Posterior vena cava (tissue), 2 donors: ENCODE measurements at regions of chr7 and their contacts with region 1.

Region 1: DNA sequence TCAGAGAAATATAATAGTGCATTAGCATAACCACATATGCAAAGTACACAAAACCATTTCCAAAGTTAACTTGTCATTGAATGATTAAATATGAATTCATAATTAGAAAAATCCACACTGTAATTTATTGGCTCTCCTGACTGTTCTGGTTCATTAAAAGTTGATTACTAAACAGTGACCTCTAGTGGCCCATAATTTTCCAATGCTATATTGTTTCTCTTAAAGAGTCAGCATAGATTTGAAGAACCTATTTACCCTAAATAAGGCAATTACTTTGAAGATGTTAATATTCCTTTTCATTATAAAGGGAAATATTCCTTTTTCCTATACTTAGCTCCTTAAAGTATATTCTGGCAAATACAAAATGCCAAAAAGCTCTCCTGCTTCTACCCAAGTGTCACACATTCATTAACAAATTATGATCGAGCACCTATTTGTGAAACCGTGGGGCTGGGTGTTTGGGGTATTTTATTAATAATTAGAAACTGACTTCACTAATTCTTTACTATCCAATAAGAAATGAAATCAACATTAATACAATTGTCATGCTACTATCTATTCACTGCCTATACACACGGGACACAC is 86.2 kb downstream of the HIBADH start:
- DNase-seq: no peak

Region 2: GRCh38 chr7:27196287-27196767 is 380.1 kb before region 1 on chr7:
- intact Hi-C with region 1: loop called in 1 of 2 experiments (anchors 10 kb)
- DNase-seq: peak; percentile 94

Region 3: GRCh38 chr7:27210441-27211083 is 365.9 kb before region 1 on chr7:
- intact Hi-C with region 1: loop called (anchors 5 to 10 kb)
- DNase-seq: peak; percentile 84

Region 4: GRCh38 chr7:27235387-27236311 is 340.8 kb before region 1 on chr7:
- intact Hi-C with region 1: loop called in 1 of 2 experiments (anchors 10 kb)
- DNase-seq: no peak

Region 5: DNA sequence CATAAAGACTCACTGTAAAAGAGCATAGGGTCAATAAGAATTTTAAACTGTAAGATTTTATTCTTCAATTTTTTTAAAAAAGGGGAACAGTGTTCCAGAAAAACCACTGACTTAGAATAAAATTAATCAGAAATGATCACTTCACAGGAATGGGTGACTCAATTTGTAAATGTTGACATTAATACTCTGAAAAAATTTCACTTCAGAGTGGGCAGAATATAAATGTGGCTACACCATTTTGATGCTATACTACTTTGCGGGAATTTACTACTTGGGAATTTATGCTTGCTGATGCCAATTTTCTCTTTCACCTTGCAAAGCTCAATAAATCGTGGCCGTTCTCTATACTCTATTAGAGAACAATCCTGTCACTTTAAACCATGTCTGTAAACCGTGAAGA is 40.7 kb before region 1 on chr7:
- intact Hi-C with region 1: no loop called
- DNase-seq: no peak

Region 6: DNA sequence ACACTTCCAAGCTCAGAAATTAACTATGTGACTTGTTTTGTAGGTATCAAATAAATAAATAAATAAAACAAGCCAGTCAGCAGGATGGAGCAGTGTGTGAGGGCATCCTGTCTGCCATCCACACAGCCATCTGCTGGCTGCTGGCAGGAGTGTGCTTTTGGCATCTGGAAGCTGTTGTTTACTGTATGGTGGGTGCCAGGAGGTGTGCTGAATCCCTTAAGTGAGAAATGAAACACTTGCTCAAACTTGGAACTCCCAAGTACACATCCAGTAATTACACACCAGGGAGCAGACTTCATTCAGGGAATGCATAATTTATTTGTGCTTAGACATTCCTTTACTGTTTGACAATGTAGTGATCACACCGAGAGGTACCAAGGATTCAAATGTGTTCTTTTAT is 146.6 kb after region 1 on chr7:
- intact Hi-C with region 1: no loop called
- DNase-seq: no peak